Sigmoid colon (tissue), 7 donors: ENCODE measurements at regions of chr21 and their contacts with region 1.

Region 1: GRCh38 chr21:29232601-29233546 is 65.8 kb upstream of the BACH1 start:
- DNase-seq: no peak
- H3K4me3 ChIP-seq: no peak overlapping the region
- H3K27ac ChIP-seq: no peak overlapping the region
- H3K4me1 ChIP-seq: peaks cover 0 to 20% (median 16%) of the 10 kb centered on the region in 4 donors
- H3K27me3 ChIP-seq: no peaks in the 10 kb centered on the region
- CTCF ChIP-seq: no peak
- EP300 ChIP-seq: no peak
- POLR2A ChIP-seq: no peak

Region 2: GRCh38 chr21:29181799-29182470 is 50.9 kb before region 1 on chr21:
- intact Hi-C with region 1: loop called (anchors 10 kb)
- DNase-seq: no peak
- H3K4me3 ChIP-seq: peak overlapping the region in 3 of 4 donors; percentile 26 to 40 (median 31)
- H3K27ac ChIP-seq: peak overlapping the region; percentile 68 to 80 (median 74)
- H3K4me1 ChIP-seq: peaks cover 0 to 24% (median 18%) of the 10 kb centered on the region in 4 donors
- H3K27me3 ChIP-seq: no peaks in the 10 kb centered on the region
- CTCF ChIP-seq: no peak
- EP300 ChIP-seq: peak in 1 of 4 donors; percentile 56
- POLR2A ChIP-seq: no peak

Region 3: GRCh38 chr21:29342363-29342957 is 109.6 kb after region 1 on chr21:
- intact Hi-C with region 1: loop called (anchors 2 kb)
- DNase-seq: peak; percentile 82
- H3K4me3 ChIP-seq: peak overlapping the region in 3 of 4 donors; percentile 6 to 26 (median 20)
- H3K27ac ChIP-seq: peak overlapping the region; percentile 67 to 80 (median 73)
- H3K4me1 ChIP-seq: peaks cover 0 to 89% (median 64%) of the 10 kb centered on the region in 4 donors
- H3K27me3 ChIP-seq: no peaks in the 10 kb centered on the region
- CTCF ChIP-seq: no peak
- EP300 ChIP-seq: peak in 1 of 4 donors; percentile 26
- POLR2A ChIP-seq: no peak